Mammary epithelial cell (primary cell): ENCODE measurements at regions of chr7 and their contacts with region 1.

Region 1: DNA sequence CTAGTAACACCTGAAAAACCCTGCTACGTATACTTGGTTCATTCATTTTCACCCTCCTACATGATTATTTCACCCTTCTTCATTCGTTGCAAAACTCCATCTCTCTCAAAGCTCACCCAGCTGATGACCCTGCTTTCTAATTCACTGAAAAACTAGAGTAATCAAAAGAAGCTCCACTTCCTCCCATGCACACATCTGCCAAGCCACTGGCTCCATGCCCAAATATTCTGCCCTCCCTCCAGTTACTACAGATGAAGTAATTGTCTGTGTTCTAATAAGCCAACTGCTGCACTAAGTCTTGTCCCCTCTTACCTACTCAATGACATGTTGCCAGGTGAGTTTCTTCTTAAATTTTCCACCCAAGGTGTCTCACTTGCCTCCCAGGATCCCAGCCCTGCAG is 96.9 kb upstream of the CCDC71L start:
- DNase-seq: no peak
- H3K4me3 ChIP-seq: no peak overlapping the region
- H3K27ac ChIP-seq: no peak overlapping the region
- H3K4me1 ChIP-seq: no peaks in the 10 kb centered on the region
- H3K27me3 ChIP-seq: no peaks in the 10 kb centered on the region
- CTCF ChIP-seq: no peak

Region 2: GRCh38 chr7:106542550-106543220 is 215.2 kb before region 1 on chr7:
- CTCF ChIA-PET with region 1: no interaction called
- dilution Hi-C with region 1: loop called (anchors 5 kb)
- in situ Hi-C with region 1: no loop called
- intact Hi-C with region 1: no loop called
- DNase-seq: peak; percentile 70
- H3K4me3 ChIP-seq: no peak overlapping the region
- H3K27ac ChIP-seq: no peak overlapping the region
- H3K4me1 ChIP-seq: no peaks in the 10 kb centered on the region
- H3K27me3 ChIP-seq: no peaks in the 10 kb centered on the region
- CTCF ChIP-seq: peak; percentile 68 to 81

Region 3: GRCh38 chr7:106964466-106964865 is 206.6 kb after region 1 on chr7:
- CTCF ChIA-PET with region 1: no interaction called
- dilution Hi-C with region 1: no loop called
- in situ Hi-C with region 1: no loop called
- intact Hi-C with region 1: no loop called
- DNase-seq: no peak
- H3K4me3 ChIP-seq: no peak overlapping the region
- H3K27ac ChIP-seq: no peak overlapping the region
- H3K4me1 ChIP-seq: no peaks in the 10 kb centered on the region
- H3K27me3 ChIP-seq: peaks cover 5% of the 10 kb centered on the region
- CTCF ChIP-seq: no peak